ENCODE measurements at regions of chr12 and their contacts with region 1.

Region 1: DNA sequence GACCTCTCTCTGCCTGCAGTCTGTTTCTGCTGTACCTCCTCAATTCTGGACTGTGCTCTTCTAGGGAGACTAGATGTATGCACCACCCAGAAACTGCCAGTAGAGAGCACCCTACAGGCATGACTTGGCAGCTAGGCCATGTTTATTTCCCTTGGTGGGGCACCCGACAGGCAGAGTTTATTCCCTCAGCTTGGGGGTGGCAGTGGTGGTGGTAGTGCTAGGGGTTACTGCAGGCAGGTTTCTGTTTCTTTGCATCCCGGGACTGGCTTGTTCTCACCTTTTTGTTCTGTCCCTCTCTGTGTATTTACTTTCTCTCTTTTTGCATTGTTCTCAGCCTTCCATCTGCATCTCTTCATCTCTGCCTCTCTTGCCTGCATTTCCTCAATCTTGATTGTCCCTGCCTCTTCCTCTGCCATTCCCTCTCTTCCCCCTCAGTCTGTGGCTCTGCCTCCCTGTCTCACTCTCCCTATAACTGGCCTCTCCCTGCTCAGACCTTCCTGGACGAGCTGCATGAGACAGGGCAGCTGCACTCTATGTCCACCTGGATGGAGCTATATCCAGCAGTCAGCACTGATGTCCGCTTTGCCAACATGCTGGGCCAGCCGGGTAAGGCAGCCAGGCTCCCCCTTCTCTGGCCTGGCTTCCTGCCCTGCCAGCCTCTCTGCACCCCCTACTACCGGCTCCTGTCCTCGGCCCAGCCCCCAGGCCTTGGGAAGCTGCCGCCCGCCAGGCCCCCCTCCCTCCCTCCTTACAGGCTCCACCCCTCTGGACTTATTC is 13.8 kb downstream of the PRPF40B start:
- DNase-seq: peak; percentile 84
- ATAC-seq: peak; percentile 97
- H3K4me3 Mint-ChIP-seq: no peak overlapping the region
- H3K27ac Mint-ChIP-seq: peak overlapping the region; percentile 60
- H3K4me1 Mint-ChIP-seq: peaks cover 18% of the 10 kb centered on the region
- H3K27me3 Mint-ChIP-seq: no peaks in the 10 kb centered on the region
- CTCF ChIP-seq: peak; percentile 67

Region 2: DNA sequence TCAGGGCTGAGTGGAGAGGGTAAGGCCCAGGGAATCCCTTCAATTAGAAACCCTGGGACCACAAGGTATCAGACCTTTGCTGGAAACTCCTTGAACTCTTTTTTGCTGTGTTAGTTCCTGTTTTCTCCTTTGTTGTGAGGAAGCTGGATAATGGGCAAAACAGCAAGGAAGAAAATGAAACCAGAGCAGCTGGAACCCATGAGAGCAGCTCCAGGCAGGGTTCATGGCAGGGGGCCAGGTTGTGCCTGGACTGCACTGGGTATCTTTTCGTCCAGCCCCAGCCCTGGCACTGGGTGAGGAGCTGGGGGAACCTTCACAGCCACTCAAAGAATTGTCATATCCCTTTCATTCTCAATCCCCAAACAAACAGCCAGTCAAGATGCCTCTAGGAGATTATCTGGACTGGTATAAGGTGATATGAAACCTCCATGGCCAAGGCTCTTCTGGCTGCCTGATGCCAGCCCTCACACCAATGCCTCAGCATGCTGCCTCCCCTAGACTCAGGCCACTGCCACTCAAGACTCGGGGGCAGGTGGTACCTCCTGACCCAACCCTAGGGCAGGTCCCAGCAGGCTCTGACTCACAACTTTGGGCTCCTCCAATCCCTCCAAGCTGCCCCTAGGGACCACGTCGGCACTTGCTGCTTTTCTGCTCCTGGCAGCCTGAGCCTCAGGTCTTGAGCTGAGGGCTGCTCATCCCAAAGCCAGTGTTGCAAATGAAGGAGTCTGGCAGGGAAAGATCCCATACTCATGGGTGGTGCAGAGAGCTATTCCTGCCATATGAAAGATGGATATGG is 48.2 kb before region 1 on chr12:
- CTCF ChIA-PET with region 1: no interaction called
- POLR2A ChIA-PET with region 1: no interaction called
- intact Hi-C with region 1: no loop called
- DNase-seq: no peak
- ATAC-seq: no peak
- H3K4me3 Mint-ChIP-seq: no peak overlapping the region
- H3K27ac Mint-ChIP-seq: no peak overlapping the region
- H3K4me1 Mint-ChIP-seq: no peaks in the 10 kb centered on the region
- H3K27me3 Mint-ChIP-seq: no peaks in the 10 kb centered on the region
- CTCF ChIP-seq: no peak

Region 3: DNA sequence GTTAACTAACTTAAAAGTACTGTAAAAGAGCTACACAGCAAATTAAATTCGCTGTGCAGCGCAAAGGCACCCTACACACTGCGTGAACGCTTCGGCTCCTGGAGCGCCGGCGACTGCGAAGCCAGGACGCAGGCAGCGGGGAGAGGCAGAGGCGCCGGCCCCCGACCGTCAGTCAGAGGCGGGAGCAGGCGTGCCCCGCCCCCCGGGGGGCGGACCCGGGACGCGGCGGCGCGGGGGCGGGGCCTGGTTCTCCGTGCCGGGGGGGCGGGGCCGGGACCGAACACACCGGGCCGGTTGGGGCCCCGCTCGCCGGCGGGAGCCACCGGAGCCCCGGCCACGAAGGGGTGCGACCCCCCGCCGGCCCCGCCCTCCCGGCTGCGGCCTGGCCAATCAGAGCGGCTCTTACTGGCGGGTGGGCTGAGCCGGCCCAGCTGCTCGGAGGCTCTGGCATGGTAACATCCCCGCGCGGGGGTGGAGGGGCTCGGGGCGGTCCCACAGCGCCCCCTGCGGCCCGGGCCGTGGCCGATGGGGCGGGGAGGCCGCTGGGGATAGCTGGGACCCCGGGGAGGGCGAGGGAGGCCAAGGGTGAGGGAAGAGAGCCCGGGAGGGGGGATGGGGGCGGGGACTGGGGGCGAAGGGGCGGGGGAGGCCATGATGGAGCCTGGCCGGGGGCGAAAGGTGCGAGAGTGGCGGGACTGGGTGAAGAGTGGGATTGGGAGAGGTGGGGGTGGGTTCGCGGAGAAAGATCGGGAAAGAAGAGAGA is 13.8 kb before region 1 on chr12 and contains the start of gene PRPF40B:
- CTCF ChIA-PET with region 1: interaction called, 73 read pairs
- POLR2A ChIA-PET with region 1: interaction called, 11 read pairs
- intact Hi-C with region 1: no loop called
- DNase-seq: peak; percentile 93
- ATAC-seq: peak; percentile 82
- H3K4me3 Mint-ChIP-seq: peak within 1 kb of the TSS; percentile 76
- H3K27ac Mint-ChIP-seq: peak within 1 kb of the TSS; percentile 79
- H3K4me1 Mint-ChIP-seq: peaks cover 26% of the 10 kb centered on the region
- H3K27me3 Mint-ChIP-seq: peaks cover 22% of the 10 kb centered on the region
- CTCF ChIP-seq: peak; percentile 55
- total RNA-seq, gene PRPF40B: 4.9 to 5.6 TPM

Region 4: DNA sequence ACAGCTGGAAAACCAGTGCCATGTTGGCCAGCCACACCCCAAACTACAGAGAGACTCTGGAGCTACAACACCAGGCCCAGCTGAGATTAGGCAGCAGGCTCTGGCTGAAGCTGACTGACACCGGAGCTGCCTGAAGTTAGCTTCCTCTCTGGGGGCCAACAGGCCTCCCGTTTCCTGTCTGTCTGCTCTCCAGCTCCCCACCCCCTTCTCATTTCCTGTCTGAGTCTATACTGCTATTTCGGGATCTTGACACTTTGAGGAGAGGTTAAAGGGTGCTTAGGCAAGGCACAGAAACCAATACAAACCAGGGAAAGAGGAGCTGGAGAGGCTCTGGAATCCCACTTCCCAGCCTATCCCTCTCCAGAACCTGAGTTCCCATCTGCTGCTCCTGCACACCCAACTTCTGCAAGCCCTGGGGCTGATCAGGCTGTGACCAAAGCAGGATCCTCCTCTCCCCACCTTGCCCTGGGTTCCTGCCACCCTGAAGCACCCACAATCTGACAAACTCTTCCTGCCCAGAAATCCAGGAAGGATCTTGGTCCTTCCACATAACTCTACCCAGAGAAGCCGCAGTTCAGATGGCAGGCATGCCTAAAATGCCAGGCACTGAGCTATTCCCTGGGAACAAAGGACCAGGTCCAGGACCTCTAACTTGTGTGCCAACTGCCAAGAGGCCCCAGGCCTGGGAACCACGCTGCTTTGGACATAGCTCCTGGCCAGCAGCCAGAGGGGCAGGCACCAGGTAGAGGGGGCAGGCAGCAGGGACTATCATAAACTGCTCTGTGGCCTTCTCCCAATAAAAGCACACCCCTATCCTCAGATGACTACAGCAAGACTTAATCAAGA is 26.1 kb after region 1 on chr12:
- CTCF ChIA-PET with region 1: interaction called, 27 read pairs
- POLR2A ChIA-PET with region 1: interaction called, 3 read pairs
- intact Hi-C with region 1: no loop called
- DNase-seq: peak; percentile 88
- ATAC-seq: peak; percentile 92
- H3K4me3 Mint-ChIP-seq: peak overlapping the region; percentile 67
- H3K27ac Mint-ChIP-seq: peak overlapping the region; percentile 97
- H3K4me1 Mint-ChIP-seq: peaks cover 79% of the 10 kb centered on the region
- H3K27me3 Mint-ChIP-seq: no peaks in the 10 kb centered on the region
- CTCF ChIP-seq: no peak

Region 5: DNA sequence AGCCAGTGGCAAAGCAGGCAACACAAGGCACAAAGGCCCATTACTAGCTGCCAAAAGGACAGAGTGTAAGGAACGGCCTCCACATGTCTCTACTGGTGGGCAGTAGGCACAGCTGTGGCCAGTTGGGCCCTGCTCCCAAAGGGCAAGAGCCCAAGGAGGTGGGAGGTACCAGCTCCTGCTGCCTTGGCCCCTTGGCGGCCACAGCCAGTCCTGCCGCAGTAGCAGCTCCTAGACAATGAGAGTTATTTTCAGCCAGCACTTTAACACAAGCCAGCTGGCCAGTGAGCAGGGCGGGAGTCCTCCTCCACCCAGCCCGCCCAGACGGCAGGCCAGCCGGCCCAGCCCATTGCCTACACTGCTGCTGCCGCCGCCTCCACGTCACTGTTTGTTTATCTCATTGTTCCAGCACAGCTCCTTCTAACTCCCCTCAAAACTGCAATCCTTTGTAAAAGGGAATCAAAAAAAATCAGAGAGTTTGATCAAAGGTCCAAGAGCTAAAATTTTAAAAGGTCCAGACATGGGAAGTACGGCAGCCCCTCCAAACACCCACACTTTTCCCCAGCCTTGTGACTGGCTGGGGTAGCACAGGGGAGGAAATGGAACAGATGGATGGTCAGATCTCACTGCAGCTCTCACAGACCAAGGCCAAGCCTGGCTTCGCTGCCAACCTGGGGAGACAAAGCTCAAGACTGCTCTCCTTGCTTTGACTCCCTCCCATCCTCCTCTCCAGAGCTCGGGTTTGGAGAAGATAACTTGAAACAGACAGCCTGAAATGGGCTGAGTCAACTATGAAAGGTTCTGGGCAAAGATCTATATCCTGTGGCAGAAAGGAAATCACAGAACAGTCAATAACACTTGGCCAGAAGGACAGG is 36.5 kb after region 1 on chr12:
- CTCF ChIA-PET with region 1: interaction called, 10 read pairs
- POLR2A ChIA-PET with region 1: interaction called, 4 read pairs
- intact Hi-C with region 1: no loop called
- DNase-seq: no peak
- ATAC-seq: peak; percentile 32
- H3K4me3 Mint-ChIP-seq: peak overlapping the region; percentile 16
- H3K27ac Mint-ChIP-seq: peak overlapping the region; percentile 97
- H3K4me1 Mint-ChIP-seq: peaks cover 81% of the 10 kb centered on the region
- H3K27me3 Mint-ChIP-seq: no peaks in the 10 kb centered on the region
- CTCF ChIP-seq: no peak

Region 6: GRCh38 chr12:49740930-49741881 is 104.0 kb after region 1 on chr12 and contains the start of gene TMBIM6:
- CTCF ChIA-PET with region 1: interaction called, 26 read pairs
- POLR2A ChIA-PET with region 1: interaction called, 6 read pairs
- intact Hi-C with region 1: no loop called
- DNase-seq: peak; percentile 100
- ATAC-seq: peak; percentile 91
- H3K4me3 Mint-ChIP-seq: peak within 1 kb of the TSS; percentile 99
- H3K27ac Mint-ChIP-seq: peak within 1 kb of the TSS; percentile 95
- H3K4me1 Mint-ChIP-seq: peaks cover 31% of the 10 kb centered on the region
- H3K27me3 Mint-ChIP-seq: no peaks in the 10 kb centered on the region
- CTCF ChIP-seq: peak; percentile 95
- total RNA-seq, gene TMBIM6: 437 to 443 TPM

Measured in activated CD8-positive, alpha-beta T cell treated with anti-CD3 and anti-CD28 coated beads for 36 hours (primary cell).